ENCODE measurements at regions of chr3 and their contacts with region 1.

Region 1: DNA sequence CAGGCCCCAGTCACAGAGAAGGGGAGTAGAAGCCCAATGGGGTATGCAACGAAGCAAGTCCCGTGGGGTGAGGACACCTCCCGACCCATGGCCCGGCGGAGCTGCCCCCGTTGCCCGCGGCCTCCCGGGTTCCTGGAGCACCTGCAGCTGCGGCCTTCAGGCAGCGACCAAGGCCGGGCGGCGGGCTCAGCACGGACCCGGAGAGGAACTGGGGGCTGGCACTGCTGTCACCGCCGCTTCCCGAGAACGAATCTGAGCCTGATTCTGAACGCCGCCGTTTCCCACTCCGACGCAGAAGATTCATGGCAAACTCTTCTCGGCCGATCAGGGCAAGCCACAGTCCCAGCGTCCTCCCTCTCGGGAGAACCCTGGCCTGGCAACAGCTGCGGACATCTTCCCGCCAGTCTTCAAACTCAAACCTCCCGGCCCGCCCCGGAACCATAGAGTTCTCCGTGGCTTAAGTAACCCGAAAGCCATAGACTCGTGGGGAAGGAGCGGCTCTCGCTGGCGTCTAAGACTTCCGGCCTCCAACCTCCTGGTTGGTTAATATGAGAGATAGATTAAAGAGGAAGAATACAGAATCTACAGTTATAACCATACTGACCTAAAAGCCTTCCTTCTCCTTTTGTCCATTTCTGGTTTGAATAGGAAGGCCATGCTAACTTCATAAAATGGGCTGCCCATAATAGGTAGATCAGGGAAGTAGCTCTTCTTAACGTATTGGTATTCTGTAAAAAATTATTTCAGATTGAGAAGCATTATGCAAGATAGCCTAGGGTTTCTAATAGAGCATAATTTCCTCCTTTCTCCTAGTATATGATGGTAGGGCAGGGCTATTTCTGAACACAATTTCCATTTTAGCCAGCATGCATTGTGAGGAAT is at the start of gene POLQ:
- DNase-seq: peak; percentile 73 to 93 (median 88)
- ATAC-seq: peak; percentile 99
- H3K4me3 ChIP-seq: peak within 1 kb of the TSS; percentile 65 to 72
- H3K4me3 Mint-ChIP-seq: peak within 1 kb of the TSS; percentile 92
- H3K27ac ChIP-seq: peak within 1 kb of the TSS; percentile 53 to 75
- H3K27ac Mint-ChIP-seq: peak within 1 kb of the TSS; percentile 88
- H3K4me1 ChIP-seq: peaks cover 6% of the 10 kb centered on the region
- H3K4me1 Mint-ChIP-seq: peaks cover 12% of the 10 kb centered on the region
- H3K27me3 ChIP-seq: peaks cover 0 to 2% of the 10 kb centered on the region in 2 experiments
- H3K27me3 Mint-ChIP-seq: no peaks in the 10 kb centered on the region
- CTCF ChIP-seq: no peak
- total RNA-seq, gene POLQ: 0.19 to 0.28 TPM

Region 2: DNA sequence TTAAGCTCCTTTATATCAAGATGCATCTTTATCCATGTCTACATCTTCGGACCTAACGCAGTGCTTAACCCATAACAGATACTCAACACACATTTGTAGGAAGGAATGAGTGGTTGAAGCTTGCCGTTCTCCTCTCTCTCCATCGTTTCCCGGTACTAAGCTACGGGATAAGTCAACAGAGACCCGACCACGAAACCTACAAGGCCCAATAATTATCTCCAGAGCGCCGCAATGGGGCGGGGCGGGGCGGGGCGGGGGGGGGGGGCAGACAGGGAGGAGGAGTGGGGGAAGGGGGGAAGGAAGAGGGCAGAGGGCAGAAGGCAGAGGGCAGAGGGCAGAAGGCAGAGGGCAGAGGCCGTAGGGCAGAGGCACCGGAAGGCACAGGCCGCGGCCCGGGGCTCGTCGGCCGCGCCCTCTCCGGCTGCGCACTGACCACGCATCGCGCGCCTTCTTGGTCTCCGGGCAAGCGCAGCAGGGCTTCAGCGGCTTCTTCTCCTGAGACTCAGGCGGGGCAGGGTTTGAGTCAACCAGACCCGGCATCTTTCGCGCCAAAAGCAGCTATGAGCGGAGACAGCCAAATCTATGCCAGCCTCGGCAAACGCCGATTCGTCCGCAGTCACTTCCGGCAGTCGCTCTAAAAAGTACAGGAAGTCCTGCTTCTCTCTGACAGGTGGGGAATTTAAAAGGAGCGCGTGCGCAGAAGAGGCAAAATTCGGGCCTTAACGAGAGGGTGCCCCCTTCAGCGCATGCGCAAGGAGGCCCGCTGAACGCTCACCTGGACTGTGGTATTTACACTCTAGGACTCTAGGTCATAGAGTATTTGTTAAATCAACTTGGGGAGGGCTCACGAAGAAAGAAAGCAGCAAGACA is 1868.8 kb before region 1 on chr3 and contains the start of gene COX17:
- CTCF ChIA-PET with region 1: no interaction called
- POLR2A ChIA-PET with region 1: interaction called, 3 read pairs
- intact Hi-C with region 1: loop called (anchors 5 to 10 kb)
- DNase-seq: peak; percentile 92 to 99 (median 96)
- ATAC-seq: peak; percentile 86
- H3K4me3 ChIP-seq: peak within 1 kb of the TSS; percentile 26 to 79
- H3K4me3 Mint-ChIP-seq: peak within 1 kb of the TSS; percentile 87
- H3K27ac ChIP-seq: peak within 1 kb of the TSS; percentile 49 to 95
- H3K27ac Mint-ChIP-seq: peak within 1 kb of the TSS; percentile 96
- H3K4me1 ChIP-seq: peaks cover 20% of the 10 kb centered on the region
- H3K4me1 Mint-ChIP-seq: peaks cover 35% of the 10 kb centered on the region
- H3K27me3 ChIP-seq: no peaks in the 10 kb centered on the region
- H3K27me3 Mint-ChIP-seq: no peaks in the 10 kb centered on the region
- CTCF ChIP-seq: no peak
- total RNA-seq, gene COX17: 22.4 to 23.2 TPM

Region 3: DNA sequence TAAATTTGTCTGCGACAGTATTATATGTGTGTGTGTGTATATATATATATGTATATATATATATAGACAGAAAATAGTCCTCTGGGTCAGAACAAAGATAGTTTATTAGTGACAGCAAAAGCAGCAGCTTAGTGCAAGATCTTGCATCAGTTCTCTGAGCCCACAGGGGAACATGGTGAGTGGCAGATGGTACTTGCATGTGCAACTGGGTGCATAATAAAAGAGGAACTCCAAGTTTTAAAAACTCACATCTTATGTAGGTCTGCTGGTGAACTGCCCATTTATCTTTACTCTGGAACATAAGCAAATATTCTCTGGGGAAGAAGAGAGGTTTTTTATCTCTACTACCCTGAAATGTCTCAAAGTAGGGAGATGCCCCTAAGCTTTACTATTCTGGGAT is 276.4 kb before region 1 on chr3:
- CTCF ChIA-PET with region 1: no interaction called
- POLR2A ChIA-PET with region 1: no interaction called
- intact Hi-C with region 1: no loop called
- DNase-seq: no peak
- ATAC-seq: no peak
- H3K4me3 ChIP-seq: no peak overlapping the region
- H3K4me3 Mint-ChIP-seq: no peak overlapping the region
- H3K27ac ChIP-seq: no peak overlapping the region
- H3K27ac Mint-ChIP-seq: no peak overlapping the region
- H3K4me1 ChIP-seq: no peaks in the 10 kb centered on the region
- H3K4me1 Mint-ChIP-seq: no peaks in the 10 kb centered on the region
- H3K27me3 ChIP-seq: no peaks in the 10 kb centered on the region
- H3K27me3 Mint-ChIP-seq: no peaks in the 10 kb centered on the region
- CTCF ChIP-seq: no peak

Region 4: GRCh38 chr3:121749276-121750086 is 203.7 kb after region 1 on chr3 and contains the start of gene GOLGB1:
- CTCF ChIA-PET with region 1: interaction called, 3 read pairs
- POLR2A ChIA-PET with region 1: no interaction called
- intact Hi-C with region 1: loop called (anchors 1 to 5 kb)
- DNase-seq: peak; percentile 74 to 99 (median 90)
- ATAC-seq: peak; percentile 94
- H3K4me3 ChIP-seq: peak within 1 kb of the TSS; percentile 86 to 94
- H3K4me3 Mint-ChIP-seq: no peak within 1 kb of the TSS
- H3K27ac ChIP-seq: peak within 1 kb of the TSS; percentile 97 to 98
- H3K27ac Mint-ChIP-seq: no peak within 1 kb of the TSS
- H3K4me1 ChIP-seq: peaks cover 19% of the 10 kb centered on the region
- H3K4me1 Mint-ChIP-seq: peaks cover 14% of the 10 kb centered on the region
- H3K27me3 ChIP-seq: peaks cover 0 to 6% of the 10 kb centered on the region in 2 experiments
- H3K27me3 Mint-ChIP-seq: peaks cover 4% of the 10 kb centered on the region
- CTCF ChIP-seq: no peak
- total RNA-seq, gene GOLGB1: 47.4 to 53.9 TPM

Region 5: DNA sequence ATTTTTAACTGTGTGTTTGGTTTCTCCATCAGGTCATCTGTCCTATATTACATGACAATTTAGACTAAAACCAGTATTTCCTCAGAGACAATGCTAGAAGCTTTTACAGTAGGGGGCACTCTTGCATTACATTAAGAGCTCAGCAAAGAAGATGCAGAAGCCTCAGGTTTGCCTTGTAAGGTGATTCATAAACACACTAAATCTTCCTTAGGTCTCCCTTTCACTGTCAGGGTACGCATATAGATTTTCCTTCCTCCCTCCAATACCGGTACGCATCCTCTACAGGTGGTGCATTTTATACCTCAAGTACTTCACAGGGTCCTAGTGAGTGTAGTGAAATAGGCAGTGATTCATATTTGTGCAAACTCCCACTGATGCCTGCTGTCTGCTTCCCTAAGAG is 555.8 kb after region 1 on chr3:
- CTCF ChIA-PET with region 1: interaction called, 10 read pairs
- POLR2A ChIA-PET with region 1: interaction called, 3 read pairs
- intact Hi-C with region 1: loop called in 1 of 2 experiments (anchors 2 kb)
- DNase-seq: peak in 3 of 9 experiments; percentile 16 to 78 (median 67)
- ATAC-seq: peak; percentile 72
- H3K4me3 ChIP-seq: no peak overlapping the region
- H3K4me3 Mint-ChIP-seq: no peak overlapping the region
- H3K27ac ChIP-seq: no peak overlapping the region
- H3K27ac Mint-ChIP-seq: no peak overlapping the region
- H3K4me1 ChIP-seq: peaks cover 6% of the 10 kb centered on the region
- H3K4me1 Mint-ChIP-seq: peaks cover 15% of the 10 kb centered on the region
- H3K27me3 ChIP-seq: no peaks in the 10 kb centered on the region
- H3K27me3 Mint-ChIP-seq: no peaks in the 10 kb centered on the region
- CTCF ChIP-seq: peak; percentile 39

Region 6: DNA sequence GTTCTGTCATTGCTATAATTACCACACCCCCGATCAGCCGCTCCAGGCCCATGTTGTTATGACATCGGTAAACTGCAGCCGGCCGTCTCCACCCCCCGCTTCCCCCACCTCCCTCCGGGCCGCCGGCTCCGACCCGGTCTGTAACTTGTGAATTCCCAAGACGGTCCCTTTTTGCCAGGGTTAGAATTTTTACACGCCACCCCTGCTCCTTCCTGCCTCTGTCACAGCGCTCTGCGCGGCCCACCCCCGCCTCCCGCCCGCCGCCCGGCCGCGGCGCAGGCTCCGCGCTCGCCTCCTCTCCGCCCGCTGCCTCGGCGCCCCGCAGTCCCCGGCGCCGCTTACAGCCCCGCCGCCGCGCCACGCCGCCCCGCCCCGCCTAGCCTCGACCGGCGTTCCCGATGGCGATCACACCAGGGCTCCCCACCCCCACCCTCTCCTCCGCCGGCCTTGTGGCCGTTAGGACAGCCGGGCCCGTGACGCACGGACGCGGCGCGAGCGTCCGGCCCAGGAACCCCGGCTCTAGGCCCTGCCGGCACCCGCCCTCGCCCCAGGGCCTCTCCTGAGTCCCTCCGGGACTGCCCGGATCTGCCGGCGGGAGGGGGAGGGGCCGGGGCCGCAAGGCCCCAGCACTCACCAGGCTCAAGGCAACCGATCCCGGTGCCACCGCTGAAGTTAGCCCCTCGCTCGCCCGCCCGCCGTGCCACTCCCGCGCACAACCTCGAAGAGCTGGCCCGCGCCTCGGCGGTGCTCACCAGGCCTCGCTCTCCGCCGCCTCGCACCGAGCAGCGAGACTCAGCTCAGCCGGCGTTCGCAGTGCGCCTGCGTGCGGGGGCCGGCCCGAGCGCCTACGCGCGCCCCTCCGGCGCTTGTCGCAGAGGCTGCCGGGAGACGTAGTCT is 968.6 kb after region 1 on chr3 and contains the start of gene KPNA1:
- CTCF ChIA-PET with region 1: no interaction called
- POLR2A ChIA-PET with region 1: no interaction called
- intact Hi-C with region 1: loop called in 1 of 2 experiments (anchors 10 kb)
- DNase-seq: peak; percentile 74 to 95 (median 85)
- ATAC-seq: peak; percentile 86
- H3K4me3 ChIP-seq: peak within 1 kb of the TSS; percentile 67 to 74
- H3K4me3 Mint-ChIP-seq: peak within 1 kb of the TSS; percentile 74
- H3K27ac ChIP-seq: peak within 1 kb of the TSS; percentile 88 to 89
- H3K27ac Mint-ChIP-seq: peak within 1 kb of the TSS; percentile 89
- H3K4me1 ChIP-seq: peaks cover 18% of the 10 kb centered on the region
- H3K4me1 Mint-ChIP-seq: peaks cover 42% of the 10 kb centered on the region
- H3K27me3 ChIP-seq: no peaks in the 10 kb centered on the region
- H3K27me3 Mint-ChIP-seq: no peaks in the 10 kb centered on the region
- CTCF ChIP-seq: no peak
- total RNA-seq, gene KPNA1: 39.3 to 45.0 TPM

Region 7: GRCh38 chr3:123028233-123028828 is 1482.5 kb after region 1 on chr3:
- CTCF ChIA-PET with region 1: interaction called, 4 read pairs
- POLR2A ChIA-PET with region 1: no interaction called
- intact Hi-C with region 1: loop called (anchors 1 kb)
- DNase-seq: peak in 3 of 9 experiments; percentile 13 to 54 (median 45)
- ATAC-seq: no peak
- H3K4me3 ChIP-seq: peak overlapping the region; percentile 46 to 49
- H3K4me3 Mint-ChIP-seq: peak overlapping the region; percentile 76
- H3K27ac ChIP-seq: no peak overlapping the region
- H3K27ac Mint-ChIP-seq: no peak overlapping the region
- H3K4me1 ChIP-seq: peaks cover 7% of the 10 kb centered on the region
- H3K4me1 Mint-ChIP-seq: peaks cover 22% of the 10 kb centered on the region
- H3K27me3 ChIP-seq: peaks cover 16 to 28% of the 10 kb centered on the region in 2 experiments
- H3K27me3 Mint-ChIP-seq: peaks cover 56% of the 10 kb centered on the region
- CTCF ChIP-seq: peak; percentile 17

Region 8: GRCh38 chr3:123489400-123490004 is 1943.7 kb after region 1 on chr3:
- CTCF ChIA-PET with region 1: no interaction called
- POLR2A ChIA-PET with region 1: no interaction called
- intact Hi-C with region 1: loop called in 1 of 2 experiments (anchors 5 kb)
- DNase-seq: peak in 6 of 9 experiments; percentile 10 to 53 (median 37)
- ATAC-seq: no peak
- H3K4me3 ChIP-seq: no peak overlapping the region
- H3K4me3 Mint-ChIP-seq: no peak overlapping the region
- H3K27ac ChIP-seq: no peak overlapping the region
- H3K27ac Mint-ChIP-seq: no peak overlapping the region
- H3K4me1 ChIP-seq: no peaks in the 10 kb centered on the region
- H3K4me1 Mint-ChIP-seq: peaks cover 5% of the 10 kb centered on the region
- H3K27me3 ChIP-seq: no peaks in the 10 kb centered on the region
- H3K27me3 Mint-ChIP-seq: peaks cover 3% of the 10 kb centered on the region
- CTCF ChIP-seq: peak; percentile 64